CD8-positive, alpha-beta memory T cell (primary cell): ENCODE measurements at regions of chr6 and their contacts with region 1.

Region 1: GRCh38 chr6:29649701-29650673 is 6.9 kb upstream of the MOG start:
- DNase-seq: peak; percentile 96 to 99 (median 98)
- H3K4me3 ChIP-seq: peak overlapping the region; percentile 87
- H3K4me3 Mint-ChIP-seq: peak overlapping the region; percentile 86 to 100 (median 97)
- H3K27ac ChIP-seq: peak overlapping the region; percentile 92
- H3K27ac Mint-ChIP-seq: peak overlapping the region; percentile 88 to 100 (median 100)
- H3K4me1 ChIP-seq: peaks cover 14% of the 10 kb centered on the region
- H3K4me1 Mint-ChIP-seq: peaks cover 10 to 20% (median 15%) of the 10 kb centered on the region in 3 donors
- H3K27me3 ChIP-seq: no peaks in the 10 kb centered on the region
- H3K27me3 Mint-ChIP-seq: peaks cover 6 to 7% of the 10 kb centered on the region in 2 donors

Region 2: GRCh38 chr6:29627755-29628418 is 22.1 kb before region 1 on chr6:
- CTCF ChIA-PET with region 1: interaction called, 34 read pairs
- POLR2A ChIA-PET with region 1: interaction called, 9 read pairs
- DNase-seq: peak; percentile 37 to 73 (median 51)
- H3K4me3 ChIP-seq: peak overlapping the region; percentile 78
- H3K4me3 Mint-ChIP-seq: peak overlapping the region; percentile 81 to 94 (median 92)
- H3K27ac ChIP-seq: peak overlapping the region; percentile 57
- H3K27ac Mint-ChIP-seq: peak overlapping the region in 6 of 8 donors; percentile 2 to 78 (median 52)
- H3K4me1 ChIP-seq: peaks cover 23% of the 10 kb centered on the region
- H3K4me1 Mint-ChIP-seq: peaks cover 33 to 38% (median 36%) of the 10 kb centered on the region in 3 donors
- H3K27me3 ChIP-seq: peaks cover 4% of the 10 kb centered on the region
- H3K27me3 Mint-ChIP-seq: peaks cover 3 to 21% of the 10 kb centered on the region in 2 donors

Region 3: GRCh38 chr6:29665942-29666825 is 16.2 kb after region 1 on chr6:
- CTCF ChIA-PET with region 1: interaction called, 85 read pairs
- POLR2A ChIA-PET with region 1: no interaction called
- DNase-seq: no peak
- H3K4me3 ChIP-seq: no peak overlapping the region
- H3K4me3 Mint-ChIP-seq: no peak overlapping the region
- H3K27ac ChIP-seq: no peak overlapping the region
- H3K27ac Mint-ChIP-seq: peak overlapping the region in 2 of 8 donors; percentile 21 to 27
- H3K4me1 ChIP-seq: no peaks in the 10 kb centered on the region
- H3K4me1 Mint-ChIP-seq: no peaks in the 10 kb centered on the region
- H3K27me3 ChIP-seq: peaks cover 4% of the 10 kb centered on the region
- H3K27me3 Mint-ChIP-seq: peaks cover 20 to 22% of the 10 kb centered on the region in 2 donors

Region 4: GRCh38 chr6:29696155-29697125 is 46.5 kb after region 1 on chr6:
- CTCF ChIA-PET with region 1: interaction called, 10 read pairs
- POLR2A ChIA-PET with region 1: no interaction called
- DNase-seq: no peak
- H3K4me3 ChIP-seq: no peak overlapping the region
- H3K4me3 Mint-ChIP-seq: no peak overlapping the region
- H3K27ac ChIP-seq: no peak overlapping the region
- H3K27ac Mint-ChIP-seq: no peak overlapping the region
- H3K4me1 ChIP-seq: no peaks in the 10 kb centered on the region
- H3K4me1 Mint-ChIP-seq: no peaks in the 10 kb centered on the region
- H3K27me3 ChIP-seq: no peaks in the 10 kb centered on the region
- H3K27me3 Mint-ChIP-seq: peaks cover 6 to 22% of the 10 kb centered on the region in 2 donors

Region 5: DNA sequence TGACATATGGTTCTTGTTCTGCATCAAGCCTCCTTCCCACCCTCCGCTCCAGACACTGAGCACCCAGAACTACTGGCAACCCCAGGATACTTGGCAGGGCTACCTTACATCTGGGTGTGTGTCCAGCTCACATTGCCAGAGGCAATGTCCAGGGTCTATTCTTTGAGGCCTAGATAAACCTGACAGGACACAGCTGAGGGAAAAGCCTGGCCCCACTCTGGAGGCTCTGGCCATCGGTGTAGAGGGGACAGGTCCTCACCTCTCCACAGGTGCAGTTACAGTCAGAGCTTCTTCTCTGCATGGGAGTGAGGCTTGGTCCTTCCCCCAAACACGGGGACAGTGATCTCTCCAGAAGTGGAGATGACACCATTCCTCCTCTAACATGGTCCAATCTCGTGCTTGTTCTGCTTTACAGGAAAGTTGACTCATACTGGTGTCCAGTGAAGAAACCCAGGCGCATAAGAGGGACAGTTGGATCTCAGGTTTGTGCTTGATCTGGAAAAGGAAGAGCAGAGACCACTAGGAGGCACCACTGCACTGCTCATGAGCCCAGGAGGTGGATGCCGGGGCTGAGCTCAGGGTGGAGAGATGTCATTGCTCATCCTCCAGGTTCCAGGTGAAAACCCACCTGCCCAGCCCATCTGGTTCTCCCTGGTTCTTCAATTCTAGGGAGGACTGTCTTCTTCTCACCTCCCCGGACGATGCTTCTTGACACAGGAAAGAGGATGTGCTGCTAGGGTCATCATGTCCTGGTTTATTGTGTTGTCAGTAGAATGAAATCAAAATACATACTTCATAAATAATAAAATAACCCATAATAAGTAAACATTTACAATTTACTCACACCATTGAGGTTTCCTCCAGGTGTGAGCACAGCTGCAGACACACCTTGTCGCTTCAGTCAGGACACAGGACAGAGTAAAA is 88.0 kb after region 1 on chr6:
- CTCF ChIA-PET with region 1: interaction called, 10 read pairs
- POLR2A ChIA-PET with region 1: no interaction called
- DNase-seq: peak; percentile 48 to 82 (median 63)
- H3K4me3 ChIP-seq: no peak overlapping the region
- H3K4me3 Mint-ChIP-seq: no peak overlapping the region
- H3K27ac ChIP-seq: no peak overlapping the region
- H3K27ac Mint-ChIP-seq: peak overlapping the region in 1 of 8 donors; percentile 33
- H3K4me1 ChIP-seq: no peaks in the 10 kb centered on the region
- H3K4me1 Mint-ChIP-seq: peaks cover 6 to 22% (median 12%) of the 10 kb centered on the region in 3 donors
- H3K27me3 ChIP-seq: no peaks in the 10 kb centered on the region
- H3K27me3 Mint-ChIP-seq: no peaks in the 10 kb centered on the region

Region 6: GRCh38 chr6:29834564-29835436 is 184.8 kb after region 1 on chr6:
- CTCF ChIA-PET with region 1: interaction called, 36 read pairs
- POLR2A ChIA-PET with region 1: no interaction called
- DNase-seq: peak; percentile 34 to 73 (median 49)
- H3K4me3 ChIP-seq: no peak overlapping the region
- H3K4me3 Mint-ChIP-seq: no peak overlapping the region
- H3K27ac ChIP-seq: no peak overlapping the region
- H3K27ac Mint-ChIP-seq: no peak overlapping the region
- H3K4me1 ChIP-seq: no peaks in the 10 kb centered on the region
- H3K4me1 Mint-ChIP-seq: peaks cover 0 to 3% (median 0%) of the 10 kb centered on the region in 3 donors
- H3K27me3 ChIP-seq: peaks cover 23% of the 10 kb centered on the region
- H3K27me3 Mint-ChIP-seq: peaks cover 49 to 76% of the 10 kb centered on the region in 2 donors